Endothelial cell of umbilical vein (primary cell): ENCODE measurements at regions of chr11 and their contacts with region 1.

Region 1: GRCh38 chr11:57249384-57250319 is 12.6 kb upstream of the APLNR start:
- DNase-seq: peak; percentile 76
- H3K4me3 ChIP-seq: no peak overlapping the region
- H3K27ac ChIP-seq: no peak overlapping the region
- H3K4me1 ChIP-seq: peaks cover 6% of the 10 kb centered on the region
- H3K27me3 ChIP-seq: peaks cover 5 to 9% of the 10 kb centered on the region in 2 experiments
- CTCF ChIP-seq: peak; percentile 77 to 78
- POLR2A ChIP-seq: no peak

Region 2: GRCh38 chr11:57085611-57086010 is 164.0 kb before region 1 on chr11:
- CTCF ChIA-PET with region 1: interaction called, 23 read pairs
- POLR2A ChIA-PET with region 1: no interaction called
- dilution Hi-C with region 1: no loop called
- intact Hi-C with region 1: no loop called
- DNase-seq: peak; percentile 48
- H3K4me3 ChIP-seq: no peak overlapping the region
- H3K27ac ChIP-seq: no peak overlapping the region
- H3K4me1 ChIP-seq: no peaks in the 10 kb centered on the region
- H3K27me3 ChIP-seq: peaks cover 3 to 5% of the 10 kb centered on the region in 2 experiments
- CTCF ChIP-seq: no peak
- POLR2A ChIP-seq: no peak

Region 3: DNA sequence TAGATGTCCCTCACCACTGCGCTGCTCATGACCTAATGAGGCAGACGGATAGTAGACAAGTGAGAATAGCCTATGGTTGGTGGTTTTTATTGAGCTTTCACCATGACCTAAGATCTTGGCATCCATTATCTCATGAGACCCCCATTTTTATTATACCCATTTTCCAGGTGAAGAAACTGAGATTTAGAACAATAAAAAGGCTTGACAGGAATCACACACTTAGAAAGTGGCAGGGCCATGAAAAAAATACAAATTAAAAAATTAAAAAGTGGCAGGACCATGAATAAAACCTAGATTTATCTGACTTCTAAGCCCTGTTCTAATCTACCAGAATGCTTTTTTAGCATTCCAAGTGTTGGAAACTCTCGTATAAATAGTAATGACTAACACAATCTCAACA is 66.8 kb before region 1 on chr11:
- CTCF ChIA-PET with region 1: interaction called, 10 read pairs
- POLR2A ChIA-PET with region 1: no interaction called
- dilution Hi-C with region 1: no loop called
- intact Hi-C with region 1: no loop called
- DNase-seq: no peak
- H3K4me3 ChIP-seq: no peak overlapping the region
- H3K27ac ChIP-seq: no peak overlapping the region
- H3K4me1 ChIP-seq: no peaks in the 10 kb centered on the region
- H3K27me3 ChIP-seq: no peaks in the 10 kb centered on the region
- CTCF ChIP-seq: no peak
- POLR2A ChIP-seq: no peak

Region 4: GRCh38 chr11:57237204-57237681 is 12.4 kb before region 1 on chr11 and contains the start of gene APLNR:
- CTCF ChIA-PET with region 1: interaction called, 31 read pairs
- POLR2A ChIA-PET with region 1: no interaction called
- dilution Hi-C with region 1: no loop called
- intact Hi-C with region 1: no loop called
- DNase-seq: no peak
- H3K4me3 ChIP-seq: no peak within 1 kb of the TSS
- H3K27ac ChIP-seq: no peak within 1 kb of the TSS
- H3K4me1 ChIP-seq: no peaks in the 10 kb centered on the region
- H3K27me3 ChIP-seq: peaks cover 47 to 53% of the 10 kb centered on the region in 2 experiments
- CTCF ChIP-seq: no peak
- POLR2A ChIP-seq: no peak
- total RNA-seq, gene APLNR: 0.09 and 0.38 TPM in 2 replicates

Region 5: GRCh38 chr11:57288771-57289579 is 39.3 kb after region 1 on chr11:
- CTCF ChIA-PET with region 1: interaction called, 16 read pairs
- POLR2A ChIA-PET with region 1: no interaction called
- dilution Hi-C with region 1: no loop called
- intact Hi-C with region 1: no loop called
- DNase-seq: peak; percentile 94
- H3K4me3 ChIP-seq: no peak overlapping the region
- H3K27ac ChIP-seq: peak overlapping the region; percentile 74
- H3K4me1 ChIP-seq: peaks cover 24% of the 10 kb centered on the region
- H3K27me3 ChIP-seq: no peaks in the 10 kb centered on the region
- CTCF ChIP-seq: no peak
- POLR2A ChIP-seq: peak; percentile 40

Region 6: DNA sequence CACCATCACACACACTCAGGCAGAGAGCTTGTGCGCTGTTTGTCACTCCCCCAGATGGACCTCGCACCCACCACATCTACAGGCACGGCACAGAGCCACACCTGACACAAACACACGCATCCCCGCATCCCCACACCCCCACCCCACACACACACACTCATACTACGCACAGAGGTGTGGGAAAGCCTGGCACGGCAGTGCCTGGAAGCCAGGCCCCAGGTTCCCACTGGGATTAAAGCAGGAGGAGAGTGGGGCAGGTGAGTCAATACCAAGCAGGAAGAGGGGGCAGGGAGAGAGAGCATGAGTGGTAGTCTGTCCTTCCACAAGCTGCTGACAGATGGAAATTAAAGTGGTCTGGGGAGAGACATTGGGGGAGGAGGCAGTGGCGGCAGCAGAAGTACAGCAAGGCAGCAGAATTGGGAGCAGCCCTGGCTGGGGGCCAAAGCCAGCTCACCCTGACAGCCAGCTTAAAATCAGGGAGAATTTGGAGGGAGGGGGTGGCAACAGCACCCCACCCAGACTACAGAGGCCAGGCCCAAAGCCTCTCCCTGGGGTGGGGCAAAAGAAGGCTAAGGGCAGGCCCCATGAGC is 54.4 kb after region 1 on chr11:
- CTCF ChIA-PET with region 1: no interaction called
- POLR2A ChIA-PET with region 1: no interaction called
- dilution Hi-C with region 1: no loop called
- intact Hi-C with region 1: no loop called
- DNase-seq: no peak
- H3K4me3 ChIP-seq: no peak overlapping the region
- H3K27ac ChIP-seq: no peak overlapping the region
- H3K4me1 ChIP-seq: peaks cover 5% of the 10 kb centered on the region
- H3K27me3 ChIP-seq: no peaks in the 10 kb centered on the region
- CTCF ChIP-seq: no peak
- POLR2A ChIP-seq: no peak